Prostate gland (tissue), 2 donors: ENCODE measurements at regions of chr9 and their contacts with region 1.

Region 1: GRCh38 chr9:134641173-134641985 is at the start of gene COL5A1:
- DNase-seq: peak; percentile 92
- H3K4me3 ChIP-seq: peak within 1 kb of the TSS; percentile 53 to 56
- H3K27ac ChIP-seq: peak within 1 kb of the TSS; percentile 80
- H3K4me1 ChIP-seq: peaks cover 9% of the 10 kb centered on the region
- H3K27me3 ChIP-seq: no peaks in the 10 kb centered on the region
- CTCF ChIP-seq: peak in 2 of 4 experiments; percentile 60 to 62
- POLR2A ChIP-seq: peak; percentile 88
- total RNA-seq, gene COL5A1: 16.9 to 36.0 TPM

Region 2: DNA sequence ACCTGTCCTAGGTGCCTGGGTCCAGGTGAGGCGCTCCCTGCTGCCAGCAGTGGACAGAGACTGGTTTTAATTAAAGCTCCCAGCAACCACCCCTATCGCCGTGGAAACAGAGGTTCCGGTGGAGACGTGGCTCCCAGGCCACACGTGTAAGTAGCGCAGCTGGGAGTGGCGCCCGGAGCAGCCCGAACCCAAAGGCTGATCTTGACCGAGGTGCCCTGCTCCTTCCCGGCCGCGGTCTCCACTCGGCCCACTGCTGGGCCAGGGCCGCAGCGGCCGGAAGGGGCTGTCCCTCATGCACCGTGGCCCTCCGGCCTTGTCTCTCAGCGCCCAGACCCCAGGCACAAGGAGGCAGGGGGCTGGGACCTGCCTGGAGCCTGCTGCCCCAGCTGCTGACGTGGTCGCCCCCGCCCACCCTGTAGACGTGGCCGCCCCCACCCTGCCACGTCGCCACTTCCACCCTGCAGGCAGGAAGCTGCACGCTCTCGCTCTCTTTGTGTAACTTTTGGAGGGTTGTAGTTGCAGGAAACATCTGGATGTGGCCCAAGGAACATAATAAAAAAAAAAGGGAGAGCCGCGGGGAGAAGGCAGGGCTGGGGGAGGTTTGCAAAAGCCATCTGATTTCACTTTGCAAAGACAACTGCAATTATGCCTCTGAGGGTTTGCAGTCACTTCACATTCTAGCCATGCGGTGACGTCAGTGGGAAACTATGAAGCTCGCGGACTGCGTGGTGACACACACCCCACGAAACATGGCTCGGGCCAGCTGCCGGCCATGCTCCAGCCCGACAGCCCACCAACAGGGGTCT is 185.2 kb before region 1 on chr9:
- intact Hi-C with region 1: loop called (anchors 5 kb)
- DNase-seq: peak; percentile 58
- H3K4me3 ChIP-seq: peak overlapping the region; percentile 3 to 25
- H3K27ac ChIP-seq: peak overlapping the region; percentile 78 to 80
- H3K4me1 ChIP-seq: peaks cover 11% of the 10 kb centered on the region
- H3K27me3 ChIP-seq: no peaks in the 10 kb centered on the region
- CTCF ChIP-seq: peak in 2 of 4 experiments; percentile 1 to 6
- POLR2A ChIP-seq: peak; percentile 57

Region 3: DNA sequence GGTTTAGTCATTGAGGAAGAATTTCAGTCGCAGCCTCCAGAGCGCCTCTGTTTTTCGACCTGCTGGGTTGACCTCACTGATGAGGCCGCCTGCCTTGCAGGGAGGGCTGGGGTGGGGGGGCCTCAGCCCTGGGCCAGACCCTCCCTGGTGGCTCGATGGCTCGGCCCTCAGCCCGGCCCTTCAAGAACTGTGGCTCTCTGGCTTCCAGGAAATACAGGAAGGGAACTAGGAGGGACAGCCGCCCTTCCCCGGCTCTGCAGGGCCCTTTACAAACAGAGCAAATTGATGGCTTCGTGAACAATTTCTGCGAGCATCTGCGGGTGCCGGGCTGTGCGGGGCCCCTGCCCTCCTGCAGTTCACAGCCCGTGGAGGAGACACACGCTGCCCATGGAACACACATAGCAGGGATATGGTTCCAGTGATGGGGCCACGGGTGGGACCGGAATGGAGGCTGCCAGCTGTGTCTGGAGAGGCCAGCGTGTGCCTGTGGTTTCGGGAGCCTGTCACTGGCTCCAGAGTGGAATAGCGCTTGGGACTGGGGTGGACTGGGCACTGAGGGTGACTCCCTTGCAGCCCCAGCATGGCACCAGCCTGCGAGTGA is 39.8 kb after region 1 on chr9:
- intact Hi-C with region 1: loop called (anchors 5 kb)
- DNase-seq: no peak
- H3K4me3 ChIP-seq: no peak overlapping the region
- H3K27ac ChIP-seq: no peak overlapping the region
- H3K4me1 ChIP-seq: no peaks in the 10 kb centered on the region
- H3K27me3 ChIP-seq: no peaks in the 10 kb centered on the region
- CTCF ChIP-seq: no peak
- POLR2A ChIP-seq: no peak

Region 4: DNA sequence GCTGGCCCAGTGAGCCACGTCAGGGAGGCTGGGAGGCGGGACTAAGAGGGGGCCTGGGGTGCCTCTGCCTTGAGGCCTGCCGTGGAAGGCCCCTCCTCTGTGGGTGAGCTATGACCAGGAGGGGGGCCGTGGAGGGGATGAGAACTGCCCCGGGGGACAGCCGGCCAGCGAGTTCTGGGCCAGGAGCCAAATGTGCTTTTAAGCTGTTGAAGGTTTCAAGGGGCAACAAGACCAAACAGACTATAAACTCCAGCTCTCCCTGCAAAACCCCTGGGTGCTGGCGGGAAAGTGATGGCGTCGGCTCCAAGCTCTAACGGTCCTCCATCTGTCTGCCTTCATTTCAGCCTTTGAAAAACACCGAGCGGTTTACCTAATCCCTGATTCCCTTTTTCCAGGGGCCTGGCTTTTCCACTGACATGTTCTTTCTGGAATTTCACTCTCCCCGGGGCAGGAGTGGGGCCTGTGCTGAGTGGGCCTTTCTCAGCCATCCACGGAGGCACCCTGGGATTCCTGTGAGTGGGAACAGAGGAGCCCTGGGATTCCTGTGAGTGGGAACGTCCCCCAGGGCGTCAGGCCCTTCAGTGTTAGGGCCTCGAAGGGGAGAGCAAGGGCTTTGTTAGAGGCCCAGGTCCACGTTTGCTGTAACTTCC is 65.8 kb after region 1 on chr9:
- intact Hi-C with region 1: loop called (anchors 10 kb)
- DNase-seq: peak; percentile 47
- H3K4me3 ChIP-seq: no peak overlapping the region
- H3K27ac ChIP-seq: peak overlapping the region; percentile 60 to 67
- H3K4me1 ChIP-seq: peaks cover 12% of the 10 kb centered on the region
- H3K27me3 ChIP-seq: peaks cover 4% of the 10 kb centered on the region
- CTCF ChIP-seq: no peak
- POLR2A ChIP-seq: no peak